ENCODE measurements at regions of chr6 and their contacts with region 1.

Region 1: GRCh38 chr6:90219209-90219985 is 77.2 kb downstream of the BACH2 start:
- DNase-seq: no peak
- H3K4me3 Mint-ChIP-seq: no peak overlapping the region
- H3K27ac Mint-ChIP-seq: no peak overlapping the region
- H3K4me1 Mint-ChIP-seq: peaks cover 25% of the 10 kb centered on the region
- H3K27me3 Mint-ChIP-seq: no peaks in the 10 kb centered on the region

Region 2: DNA sequence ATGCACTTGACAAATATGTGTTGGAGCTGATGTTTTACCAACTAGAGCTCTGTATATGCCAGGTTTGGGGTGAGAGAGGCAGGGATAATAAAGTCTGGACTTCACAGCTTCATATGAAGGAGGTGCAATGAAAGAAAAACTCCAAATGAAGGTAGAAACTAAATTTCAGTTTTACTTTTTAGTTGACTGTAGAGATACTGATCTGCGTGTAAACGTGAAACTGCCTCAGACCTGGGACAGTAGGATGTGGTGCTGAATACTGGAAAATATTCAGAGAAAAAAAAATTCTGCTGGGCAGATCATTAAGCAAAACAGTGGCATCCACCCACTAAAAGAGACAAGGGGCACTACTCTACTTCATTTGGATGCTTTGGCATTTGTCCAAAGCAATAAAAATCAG is 17.2 kb before region 1 on chr6:
- intact Hi-C with region 1: loop called (anchors 2 kb)
- DNase-seq: no peak
- H3K4me3 Mint-ChIP-seq: peak overlapping the region; percentile 50
- H3K27ac Mint-ChIP-seq: peak overlapping the region; percentile 52
- H3K4me1 Mint-ChIP-seq: peaks cover 37% of the 10 kb centered on the region
- H3K27me3 Mint-ChIP-seq: no peaks in the 10 kb centered on the region

Region 3: DNA sequence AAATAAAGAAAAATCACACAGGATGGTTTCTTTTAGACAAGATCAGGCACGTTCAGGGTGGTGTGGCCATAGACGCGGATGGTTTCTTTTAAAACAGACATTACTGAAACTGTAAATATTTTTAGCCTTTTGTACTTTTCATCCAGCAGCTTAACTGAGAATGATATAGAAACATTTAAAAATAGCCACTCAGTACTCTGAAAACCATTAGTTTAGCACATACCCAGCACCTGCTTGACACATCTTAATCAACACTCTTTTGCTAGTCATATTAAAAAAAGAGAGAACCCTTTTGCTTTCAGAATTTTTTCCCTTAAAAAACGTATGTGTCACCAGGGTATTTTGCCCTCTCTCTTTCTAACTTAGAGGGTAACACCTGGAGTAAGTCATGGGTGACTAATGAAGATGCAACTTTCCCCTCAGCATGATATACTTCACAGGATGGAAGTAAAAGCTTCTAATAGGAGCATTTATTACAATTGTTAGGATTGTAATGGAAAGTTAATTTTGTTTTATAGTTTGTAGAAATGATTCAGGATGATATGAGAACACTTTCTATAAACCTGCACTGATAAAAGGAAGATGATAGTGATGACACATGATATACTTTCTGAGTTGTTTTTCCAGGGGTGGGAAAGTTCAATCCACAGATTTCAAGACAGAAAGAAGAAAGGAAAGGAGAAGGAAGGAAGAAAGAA is 32.0 kb after region 1 on chr6:
- intact Hi-C with region 1: loop called (anchors 1 kb)
- DNase-seq: no peak
- H3K4me3 Mint-ChIP-seq: peak overlapping the region; percentile 48
- H3K27ac Mint-ChIP-seq: peak overlapping the region; percentile 83
- H3K4me1 Mint-ChIP-seq: peaks cover 71% of the 10 kb centered on the region
- H3K27me3 Mint-ChIP-seq: no peaks in the 10 kb centered on the region

Measured in activated T-helper 2 cell treated with anti-CD3 and anti-CD28 coated beads, Interferon-gamma antibody, Interleukin-2, Interleukin-4, amounts not matched to agents 10 μg/mL and 5 μg/mL and 100 μg/mL, durations not matched to agents 14 hours and 24 hours and 36 hours (primary cell).